Transverse colon (tissue), 4 donors: ENCODE measurements at regions of chr1 and their contacts with region 1.

Region 1: GRCh38 chr1:35475856-35476674 is 81.1 kb downstream of the KIAA0319L start:
- DNase-seq: no peak
- H3K4me3 ChIP-seq: no peak overlapping the region
- H3K27ac ChIP-seq: no peak overlapping the region
- H3K4me1 ChIP-seq: no peaks in the 10 kb centered on the region
- H3K27me3 ChIP-seq: no peaks in the 10 kb centered on the region
- CTCF ChIP-seq: no peak
- EP300 ChIP-seq: no peak
- POLR2A ChIP-seq: no peak

Region 2: DNA sequence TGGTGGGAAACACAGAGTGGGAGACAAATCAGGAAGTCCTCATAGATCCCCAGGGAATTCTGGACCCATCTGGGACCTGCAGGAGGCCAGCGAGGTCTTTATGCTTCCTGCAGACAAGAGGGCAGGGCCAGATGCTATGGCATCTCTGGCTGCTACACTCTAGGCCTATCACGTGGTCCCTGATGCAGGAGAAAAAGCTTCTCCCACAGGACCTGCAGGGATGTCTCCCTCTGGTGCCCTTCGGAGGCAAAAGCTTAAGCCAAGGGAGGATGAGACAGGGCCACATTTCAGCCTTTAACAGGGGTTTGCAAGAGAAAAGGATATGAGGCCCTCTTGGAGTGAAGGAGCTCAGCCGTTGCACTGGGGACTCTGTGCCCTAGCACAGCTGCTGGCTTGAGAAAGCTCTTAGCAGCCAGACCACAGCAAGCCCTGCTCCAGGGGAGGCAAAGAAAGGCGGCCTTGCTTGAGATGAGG is 1056.4 kb before region 1 on chr1:
- in situ Hi-C with region 1: no loop called
- intact Hi-C with region 1: loop called (anchors 10 kb)
- DNase-seq: no peak
- H3K4me3 ChIP-seq: no peak overlapping the region
- H3K27ac ChIP-seq: no peak overlapping the region
- H3K4me1 ChIP-seq: no peaks in the 10 kb centered on the region
- H3K27me3 ChIP-seq: no peaks in the 10 kb centered on the region
- CTCF ChIP-seq: no peak
- EP300 ChIP-seq: no peak
- POLR2A ChIP-seq: no peak

Region 3: DNA sequence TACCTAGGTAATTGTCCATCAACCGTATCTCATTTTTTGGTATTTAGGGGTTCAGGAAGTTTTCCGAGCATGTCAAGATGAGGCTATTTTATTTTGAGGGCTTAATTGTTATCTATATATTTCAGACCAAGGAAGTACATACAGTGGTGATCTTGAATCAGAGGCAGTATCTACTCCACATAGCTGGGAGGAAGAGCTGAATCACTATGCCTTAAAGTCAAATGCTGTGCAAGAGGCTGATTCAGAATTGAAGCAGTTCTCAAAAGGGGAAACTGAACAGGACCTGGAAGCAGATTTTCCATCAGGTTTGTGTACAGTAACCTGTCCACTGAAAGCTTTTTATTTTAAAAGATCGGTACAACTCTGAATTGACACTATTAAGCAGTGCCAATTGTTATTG is 77.3 kb before region 1 on chr1:
- in situ Hi-C with region 1: no loop called
- intact Hi-C with region 1: no loop called
- DNase-seq: no peak
- H3K4me3 ChIP-seq: no peak overlapping the region
- H3K27ac ChIP-seq: no peak overlapping the region
- H3K4me1 ChIP-seq: no peaks in the 10 kb centered on the region
- H3K27me3 ChIP-seq: no peaks in the 10 kb centered on the region
- CTCF ChIP-seq: no peak
- EP300 ChIP-seq: no peak
- POLR2A ChIP-seq: no peak

Region 4: DNA sequence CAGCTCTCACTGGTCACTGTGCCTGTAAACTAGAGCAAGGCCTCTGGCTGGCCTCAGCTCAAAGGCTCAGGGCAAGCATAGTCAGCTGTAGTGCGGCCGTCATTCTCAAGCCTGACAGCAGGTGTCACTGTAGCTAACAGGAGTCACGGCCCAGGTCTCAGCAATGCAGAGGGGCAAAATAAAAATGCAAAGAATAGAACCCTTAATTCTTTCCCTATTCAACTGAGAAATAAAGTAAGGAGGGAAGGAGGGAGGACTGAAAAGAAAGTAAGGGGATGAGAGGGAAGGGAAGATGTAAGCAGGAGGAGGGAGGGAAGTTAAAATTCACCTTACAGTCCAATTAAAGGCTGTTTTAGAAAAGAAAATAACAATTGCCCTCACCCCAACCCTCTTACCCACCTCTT is 24.9 kb before region 1 on chr1:
- in situ Hi-C with region 1: no loop called
- intact Hi-C with region 1: no loop called
- DNase-seq: peak; percentile 79
- H3K4me3 ChIP-seq: no peak overlapping the region
- H3K27ac ChIP-seq: peak overlapping the region in 3 of 4 donors; percentile 48 to 69 (median 51)
- H3K4me1 ChIP-seq: peaks cover 7 to 27% (median 13%) of the 10 kb centered on the region in 4 donors
- H3K27me3 ChIP-seq: no peaks in the 10 kb centered on the region
- CTCF ChIP-seq: peak; percentile 70 to 82 (median 78)
- EP300 ChIP-seq: no peak
- POLR2A ChIP-seq: no peak